OCI-LY7 (cell line): ENCODE measurements at regions of chr11 and their contacts with region 1.

Region 1: DNA sequence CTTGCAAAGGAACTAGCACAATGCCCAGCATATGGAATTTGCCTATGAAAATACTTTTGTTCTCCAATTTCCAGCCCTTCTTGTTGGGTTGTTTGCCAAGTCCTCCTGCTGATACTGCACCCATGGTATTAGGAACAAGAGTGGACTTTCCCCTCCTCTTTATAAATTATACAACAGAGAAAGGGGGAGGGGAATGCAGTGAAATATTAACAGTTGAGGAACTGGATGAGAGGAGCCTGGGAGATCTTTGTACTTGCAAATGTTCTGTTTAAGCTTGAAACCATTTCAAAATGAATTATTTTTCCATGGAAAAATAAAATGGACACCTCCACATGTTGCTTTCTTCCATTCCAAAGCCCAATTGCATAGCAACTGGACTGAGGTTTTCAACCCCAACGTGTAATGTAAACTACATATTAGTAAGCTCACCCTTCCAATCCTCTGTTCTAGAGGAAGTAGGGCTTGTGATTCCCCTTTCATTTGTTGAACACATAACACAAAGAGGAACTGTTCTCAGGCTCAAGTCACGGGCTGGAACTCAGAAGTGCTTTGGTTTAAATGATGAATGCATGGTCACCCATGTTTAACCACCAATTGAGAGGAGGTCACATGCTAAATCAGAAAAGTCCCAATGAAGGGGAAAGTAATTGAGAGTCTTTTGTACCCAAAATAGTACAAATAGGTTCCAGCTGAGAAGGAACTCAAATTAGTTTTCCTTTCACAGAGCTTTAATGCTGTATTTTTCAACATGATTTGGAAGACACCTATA is 66.2 kb upstream of the ZC3H12C start:
- DNase-seq: peak; percentile 89
- H3K4me3 ChIP-seq: peak overlapping the region; percentile 12
- H3K27ac ChIP-seq: peak overlapping the region; percentile 75
- H3K4me1 ChIP-seq: peaks cover 27% of the 10 kb centered on the region
- CTCF ChIP-seq: no peak

Region 2: DNA sequence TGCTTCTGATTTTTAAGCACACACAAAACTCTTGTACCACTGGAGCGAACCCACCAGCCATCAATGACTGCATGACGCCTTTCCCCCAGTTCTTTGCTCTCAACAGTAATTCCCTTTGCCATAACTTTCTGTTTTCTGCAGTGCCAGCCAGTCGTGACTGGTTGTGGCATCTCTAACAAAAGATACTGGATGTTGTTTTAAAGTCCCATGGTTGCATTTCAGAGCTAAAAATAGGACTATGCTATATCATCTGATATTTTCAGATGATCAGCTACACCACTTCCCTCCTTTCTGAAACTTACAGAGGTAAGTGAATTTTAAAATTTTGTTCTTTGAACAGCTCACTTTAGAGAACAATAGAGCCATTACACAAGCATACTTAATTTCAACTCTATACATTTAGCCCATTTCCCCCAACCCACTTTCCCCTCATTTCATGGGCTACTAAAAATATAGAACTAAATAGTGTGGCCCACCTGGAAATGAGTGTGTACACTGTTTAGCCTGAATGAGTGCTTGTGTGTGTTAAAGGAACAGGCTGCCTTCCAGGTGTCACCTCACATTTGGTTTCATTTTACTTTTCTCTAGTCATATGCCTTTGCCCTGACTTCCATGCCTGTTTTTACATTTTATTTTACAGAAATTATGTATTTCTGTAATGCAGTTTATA is 70.8 kb before region 1 on chr11:
- CTCF ChIA-PET with region 1: no interaction called
- POLR2A ChIA-PET with region 1: interaction called, 3 read pairs
- intact Hi-C with region 1: loop called (anchors 5 kb)
- DNase-seq: peak; percentile 67
- H3K4me3 ChIP-seq: peak overlapping the region; percentile 39
- H3K27ac ChIP-seq: peak overlapping the region; percentile 76
- H3K4me1 ChIP-seq: peaks cover 35% of the 10 kb centered on the region
- CTCF ChIP-seq: no peak